Posterior cingulate gyrus (tissue), 11 donors: ENCODE measurements at regions of chr15 and their contacts with region 1.

Region 1: GRCh38 chr15:73273181-73274002 is 95.4 kb downstream of the HCN4 start:
- DNase-seq: peak in 6 of 10 donors; percentile 33 to 84 (median 58)

Region 2: GRCh38 chr15:72796515-72797337 is 476.7 kb before region 1 on chr15:
- intact Hi-C with region 1: loop called (anchors 2 kb)
- DNase-seq: peak in 8 of 10 donors; percentile 25 to 88 (median 49)

Region 3: GRCh38 chr15:73196113-73196512 is 77.3 kb before region 1 on chr15:
- intact Hi-C with region 1: no loop called
- DNase-seq: no peak